ENCODE measurements at regions of chr13 and their contacts with region 1.

Region 1: DNA sequence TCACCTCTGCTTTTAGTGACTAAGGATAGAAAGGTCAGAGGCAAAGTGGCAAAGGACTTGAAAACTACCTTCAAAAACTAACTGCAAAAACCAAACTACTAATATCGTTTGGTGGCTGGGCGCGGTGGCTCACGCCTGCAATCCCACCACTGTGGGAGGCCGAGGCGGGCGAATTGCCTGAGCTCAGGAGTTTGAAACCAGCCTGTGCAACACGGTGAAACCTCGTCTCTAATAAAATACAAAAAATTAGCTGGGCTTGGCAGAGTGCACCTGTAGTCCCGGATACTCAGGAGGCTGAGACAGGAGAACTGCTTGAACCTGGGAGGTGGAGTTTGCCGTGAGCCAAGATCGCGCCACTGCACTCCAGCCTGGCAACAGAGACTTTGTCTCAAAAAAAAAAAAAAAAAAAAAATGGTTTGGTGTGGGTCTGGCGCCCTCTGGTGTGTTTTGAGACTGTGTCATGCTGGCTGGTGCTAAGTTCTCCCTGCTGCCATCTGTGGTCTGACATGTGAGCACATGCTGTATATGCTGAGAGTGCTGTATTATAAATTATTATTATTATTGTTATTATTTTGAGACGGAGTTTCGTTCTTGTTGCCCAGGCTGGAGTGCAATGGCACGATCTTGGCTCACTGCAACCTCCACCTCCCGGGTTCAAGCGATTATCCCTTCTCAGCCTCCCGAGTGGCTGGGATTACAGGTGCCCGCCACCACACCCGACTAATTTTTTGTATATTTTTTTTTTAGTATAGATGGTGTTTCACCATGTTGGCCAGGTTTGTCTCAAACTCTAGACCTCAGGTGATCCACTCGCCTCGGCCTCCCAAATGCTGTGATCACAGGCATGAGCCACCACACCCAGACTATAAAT is 36.0 kb upstream of the RNF17 start:
- DNase-seq: peak; percentile 81
- ATAC-seq: peak; percentile 98
- H3K4me3 Mint-ChIP-seq: no peak overlapping the region
- H3K27ac Mint-ChIP-seq: no peak overlapping the region
- H3K4me1 Mint-ChIP-seq: peaks cover 18% of the 10 kb centered on the region
- H3K27me3 Mint-ChIP-seq: peaks cover 21% of the 10 kb centered on the region

Region 2: GRCh38 chr13:24618014-24618955 is 109.7 kb before region 1 on chr13:
- CTCF ChIA-PET with region 1: no interaction called
- DNase-seq: peak; percentile 97
- ATAC-seq: peak; percentile 91
- H3K4me3 Mint-ChIP-seq: peak overlapping the region; percentile 43
- H3K27ac Mint-ChIP-seq: peak overlapping the region; percentile 98
- H3K4me1 Mint-ChIP-seq: peaks cover 67% of the 10 kb centered on the region
- H3K27me3 Mint-ChIP-seq: no peaks in the 10 kb centered on the region

Region 3: GRCh38 chr13:24671386-24672107 is 56.4 kb before region 1 on chr13:
- CTCF ChIA-PET with region 1: interaction called, 13 read pairs
- DNase-seq: no peak
- ATAC-seq: peak; percentile 30
- H3K4me3 Mint-ChIP-seq: no peak overlapping the region
- H3K27ac Mint-ChIP-seq: no peak overlapping the region
- H3K4me1 Mint-ChIP-seq: peaks cover 20% of the 10 kb centered on the region
- H3K27me3 Mint-ChIP-seq: peaks cover 4% of the 10 kb centered on the region

Region 4: GRCh38 chr13:24683838-24684599 is 43.9 kb before region 1 on chr13:
- CTCF ChIA-PET with region 1: interaction called, 103 read pairs
- DNase-seq: peak; percentile 81
- ATAC-seq: peak; percentile 77
- H3K4me3 Mint-ChIP-seq: no peak overlapping the region
- H3K27ac Mint-ChIP-seq: peak overlapping the region; percentile 68
- H3K4me1 Mint-ChIP-seq: peaks cover 43% of the 10 kb centered on the region
- H3K27me3 Mint-ChIP-seq: peaks cover 41% of the 10 kb centered on the region

Region 5: GRCh38 chr13:24693862-24694471 is 34.0 kb before region 1 on chr13:
- CTCF ChIA-PET with region 1: interaction called, 103 read pairs
- DNase-seq: peak; percentile 67
- ATAC-seq: peak; percentile 74
- H3K4me3 Mint-ChIP-seq: peak overlapping the region; percentile 34
- H3K27ac Mint-ChIP-seq: no peak overlapping the region
- H3K4me1 Mint-ChIP-seq: peaks cover 21% of the 10 kb centered on the region
- H3K27me3 Mint-ChIP-seq: peaks cover 50% of the 10 kb centered on the region

Region 6: GRCh38 chr13:24709186-24709913 is 18.6 kb before region 1 on chr13:
- CTCF ChIA-PET with region 1: interaction called, 59 read pairs
- DNase-seq: peak; percentile 92
- ATAC-seq: peak; percentile 97
- H3K4me3 Mint-ChIP-seq: peak overlapping the region; percentile 49
- H3K27ac Mint-ChIP-seq: peak overlapping the region; percentile 82
- H3K4me1 Mint-ChIP-seq: peaks cover 32% of the 10 kb centered on the region
- H3K27me3 Mint-ChIP-seq: peaks cover 4% of the 10 kb centered on the region

Region 7: DNA sequence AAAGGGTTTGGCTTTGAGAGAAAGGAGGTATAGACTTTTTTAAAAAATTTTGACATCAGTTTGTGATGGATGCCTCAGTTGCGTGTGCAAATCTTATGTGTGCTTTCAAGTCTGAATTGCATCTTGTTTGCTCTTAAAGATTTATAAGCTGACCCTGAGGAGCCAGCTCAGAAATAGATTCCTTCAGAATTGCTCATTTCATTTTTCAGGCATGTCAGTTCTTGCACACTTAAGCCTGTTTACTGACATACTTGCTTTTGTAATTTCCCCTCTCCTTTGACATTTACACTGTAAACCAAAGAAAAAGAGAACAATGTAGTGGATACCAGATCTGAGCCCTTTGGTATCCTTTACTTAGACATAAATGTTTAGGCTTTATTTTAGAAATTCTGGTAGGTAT is 123.6 kb after region 1 on chr13:
- CTCF ChIA-PET with region 1: no interaction called
- DNase-seq: no peak
- ATAC-seq: no peak
- H3K4me3 Mint-ChIP-seq: no peak overlapping the region
- H3K27ac Mint-ChIP-seq: no peak overlapping the region
- H3K4me1 Mint-ChIP-seq: peaks cover 3% of the 10 kb centered on the region
- H3K27me3 Mint-ChIP-seq: peaks cover 33% of the 10 kb centered on the region